Activated T-helper 1 cell treated with anti-CD3 and anti-CD28 coated beads, Interleukin-12 subunit alpha, Interleukin-12 subunit beta, Interleukin-2, Interleukin-4 antibody, amounts not matched to agents 30 ng/mL and 10 ng/mL and 1 ng/mL, durations not matched to agents 14 hours and 24 hours and 36 hours (primary cell): ENCODE measurements at regions of chr12 and their contacts with region 1.

Region 1: GRCh38 chr12:9732921-9733461 is at the start of gene CLECL1:
- DNase-seq: no peak
- H3K4me3 Mint-ChIP-seq: peak within 1 kb of the TSS; percentile 87
- H3K27ac Mint-ChIP-seq: peak within 1 kb of the TSS; percentile 89
- H3K4me1 Mint-ChIP-seq: peaks cover 76% of the 10 kb centered on the region
- H3K27me3 Mint-ChIP-seq: no peaks in the 10 kb centered on the region
- total RNA-seq, gene CLECL1: 7.6 and 9.1 TPM in 2 replicates

Region 2: GRCh38 chr12:9449181-9449580 is 283.8 kb before region 1 on chr12:
- intact Hi-C with region 1: loop called (anchors 5 kb)
- DNase-seq: no peak
- H3K4me3 Mint-ChIP-seq: peak overlapping the region; percentile 95
- H3K27ac Mint-ChIP-seq: no peak overlapping the region
- H3K4me1 Mint-ChIP-seq: peaks cover 20% of the 10 kb centered on the region
- H3K27me3 Mint-ChIP-seq: peaks cover 4% of the 10 kb centered on the region

Region 3: GRCh38 chr12:9721394-9722092 is 11.4 kb before region 1 on chr12:
- intact Hi-C with region 1: no loop called
- DNase-seq: no peak
- H3K4me3 Mint-ChIP-seq: no peak overlapping the region
- H3K27ac Mint-ChIP-seq: no peak overlapping the region
- H3K4me1 Mint-ChIP-seq: peaks cover 61% of the 10 kb centered on the region
- H3K27me3 Mint-ChIP-seq: peaks cover 4% of the 10 kb centered on the region

Region 4: DNA sequence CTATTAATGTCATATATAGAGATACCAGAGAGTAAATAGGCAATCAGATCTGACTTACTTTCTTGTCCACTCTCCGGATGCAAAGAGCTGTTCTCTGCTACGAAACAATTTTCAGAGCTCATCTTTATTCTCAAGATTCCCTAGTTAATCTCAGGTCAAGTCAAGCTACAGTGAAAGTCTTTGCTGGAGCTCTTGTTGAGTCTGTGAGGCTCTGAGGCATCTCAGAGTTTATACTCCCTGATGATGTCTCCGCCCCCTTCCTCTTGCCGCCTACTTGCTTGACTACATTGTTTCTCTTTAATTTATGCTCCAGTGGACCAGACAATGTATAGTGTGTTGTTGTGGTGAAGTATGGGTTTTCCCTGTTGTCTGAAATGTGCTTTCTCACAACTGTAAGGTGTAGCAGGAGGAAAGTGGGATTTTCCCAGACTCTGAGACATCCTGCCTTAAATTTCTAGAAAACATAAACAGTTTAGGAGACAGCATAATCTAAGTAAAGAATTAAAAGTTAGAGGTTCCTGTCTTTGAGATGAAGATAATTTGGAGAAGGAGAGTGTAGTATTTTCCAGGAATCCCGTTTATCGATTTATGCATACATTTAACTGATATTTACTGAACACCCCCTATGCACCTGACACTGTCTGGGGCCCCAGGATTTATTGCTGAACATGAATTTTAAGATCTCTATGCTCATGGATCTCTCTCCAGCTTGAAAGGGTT is 27.9 kb after region 1 on chr12 and contains the start of gene CD69:
- intact Hi-C with region 1: loop called (anchors 1 kb)
- DNase-seq: peak; percentile 81
- H3K4me3 Mint-ChIP-seq: peak within 1 kb of the TSS; percentile 98
- H3K27ac Mint-ChIP-seq: peak within 1 kb of the TSS; percentile 97
- H3K4me1 Mint-ChIP-seq: peaks cover 68% of the 10 kb centered on the region
- H3K27me3 Mint-ChIP-seq: peaks cover 6% of the 10 kb centered on the region
- total RNA-seq, gene CD69: 90.5 and 93.2 TPM in 2 replicates

Region 5: DNA sequence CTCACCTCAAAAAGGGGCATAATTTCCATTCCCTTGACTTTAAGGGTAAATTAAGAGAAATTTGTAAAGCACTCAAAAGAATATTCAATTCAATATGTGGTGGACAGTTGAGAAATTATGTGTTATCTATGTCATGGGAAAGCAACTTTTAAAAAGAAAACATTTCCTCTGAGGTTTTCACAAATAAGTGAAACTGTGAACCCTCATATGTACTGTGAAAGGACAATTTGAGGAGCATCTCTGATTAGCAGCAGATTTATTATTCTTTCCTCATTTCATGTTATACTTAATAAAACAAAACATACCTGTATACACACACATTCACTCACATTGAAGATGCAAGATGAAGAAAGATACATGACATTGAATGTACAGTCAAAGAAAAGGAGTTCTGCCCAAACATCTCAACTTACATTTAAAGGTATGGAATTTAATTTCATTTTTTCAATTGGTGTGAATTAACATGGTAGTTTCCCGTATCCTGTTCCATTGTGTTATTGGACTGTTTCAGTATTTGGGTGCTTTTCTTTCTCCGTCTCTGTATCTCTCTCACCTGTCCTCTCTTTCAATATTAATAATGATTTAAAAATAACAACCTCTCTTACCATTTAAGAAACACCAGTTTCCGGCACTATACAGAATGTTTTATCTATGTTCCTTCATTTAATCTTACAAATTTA is 94.4 kb after region 1 on chr12 and contains the start of gene KLRF1:
- intact Hi-C with region 1: no loop called
- DNase-seq: no peak
- H3K4me3 Mint-ChIP-seq: no peak within 1 kb of the TSS
- H3K27ac Mint-ChIP-seq: no peak within 1 kb of the TSS
- H3K4me1 Mint-ChIP-seq: no peaks in the 10 kb centered on the region
- H3K27me3 Mint-ChIP-seq: peaks cover 37% of the 10 kb centered on the region
- total RNA-seq, gene KLRF1: not detected in 2 replicates

Region 6: DNA sequence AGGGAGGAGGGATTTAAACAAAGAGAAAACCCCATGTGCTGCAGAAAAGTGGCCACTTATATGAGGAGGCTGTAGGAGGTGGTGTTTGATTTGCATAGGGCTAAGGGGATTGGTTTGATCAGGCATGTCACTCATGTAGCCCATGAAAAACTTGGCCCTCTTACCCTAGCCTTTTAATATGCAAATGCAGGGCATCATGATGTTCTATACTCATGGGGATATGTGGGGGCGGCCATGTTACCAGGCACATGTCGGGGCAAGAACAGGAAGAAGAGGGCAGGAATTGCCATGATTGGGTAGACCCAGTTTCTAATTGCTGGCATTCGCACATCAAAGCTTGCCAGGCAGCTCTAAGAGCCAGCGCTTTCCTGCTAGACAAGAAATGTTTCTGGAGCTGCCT is 628.1 kb after region 1 on chr12:
- intact Hi-C with region 1: no loop called
- DNase-seq: no peak
- H3K4me3 Mint-ChIP-seq: no peak overlapping the region
- H3K27ac Mint-ChIP-seq: no peak overlapping the region
- H3K4me1 Mint-ChIP-seq: no peaks in the 10 kb centered on the region
- H3K27me3 Mint-ChIP-seq: peaks cover 37% of the 10 kb centered on the region